ENCODE measurements at regions of chr10 and their contacts with region 1.

Region 1: GRCh38 chr10:98030031-98030821 is at the start of gene CRTAC1:
- DNase-seq: peak; percentile 79 to 92 (median 86)
- H3K4me3 ChIP-seq: peak within 1 kb of the TSS; percentile 47 to 78 (median 66)
- H3K27ac ChIP-seq: peak within 1 kb of the TSS in 52 of 59 donors; percentile 28 to 87 (median 74)
- H3K27me3 ChIP-seq: peaks cover 0 to 22% (median 0%) of the 10 kb centered on the region in 45 donors
- CTCF ChIP-seq: peak in 31 of 56 donors; percentile 6 to 63 (median 30)
- total RNA-seq, gene CRTAC1: 13.6 to 61.1 (median 37.8) TPM

Region 2: GRCh38 chr10:97914837-97915211 is 115.4 kb before region 1 on chr10:
- intact Hi-C with region 1: loop called (anchors 1 to 2 kb)
- DNase-seq: peak; percentile 76 to 87 (median 82)
- H3K4me3 ChIP-seq: peak overlapping the region in 10 of 59 donors; percentile 3 to 50 (median 18)
- H3K27ac ChIP-seq: peak overlapping the region in 14 of 59 donors; percentile 1 to 87 (median 78)
- H3K27me3 ChIP-seq: no peaks in the 10 kb centered on the region
- CTCF ChIP-seq: peak; percentile 69 to 99 (median 96)

Region 3: DNA sequence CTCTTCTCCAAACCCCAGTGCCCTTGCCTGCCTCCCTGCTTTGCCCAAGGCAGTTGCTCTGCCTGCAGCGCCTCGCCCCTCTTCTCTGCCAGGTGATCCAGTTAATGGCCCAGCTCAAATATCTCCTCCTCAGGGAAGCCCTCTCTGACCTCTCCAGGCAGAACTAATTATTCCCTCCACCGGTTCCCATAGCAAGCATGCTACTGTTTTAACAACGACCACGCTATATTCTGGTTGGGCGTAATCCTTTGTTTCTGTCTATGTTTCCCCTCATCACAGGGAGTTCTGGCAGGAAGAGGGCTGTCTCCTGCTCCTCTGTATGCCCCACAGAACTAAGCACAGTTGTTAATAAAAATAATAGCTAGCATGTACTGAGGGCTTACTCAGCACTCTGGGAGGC is 67.4 kb after region 1 on chr10:
- intact Hi-C with region 1: no loop called
- DNase-seq: no peak
- H3K4me3 ChIP-seq: no peak overlapping the region
- H3K27ac ChIP-seq: no peak overlapping the region
- H3K27me3 ChIP-seq: peaks cover 0 to 5% (median 0%) of the 10 kb centered on the region in 45 donors
- CTCF ChIP-seq: no peak

Region 4: GRCh38 chr10:98361131-98362025 is 331.2 kb after region 1 on chr10:
- intact Hi-C with region 1: no loop called
- DNase-seq: peak in 9 of 10 donors; percentile 67 to 93 (median 81)
- H3K4me3 ChIP-seq: peak overlapping the region in 14 of 59 donors; percentile 7 to 39 (median 22)
- H3K27ac ChIP-seq: peak overlapping the region in 41 of 59 donors; percentile 0 to 79 (median 43)
- H3K27me3 ChIP-seq: no peaks in the 10 kb centered on the region
- CTCF ChIP-seq: no peak